ENCODE measurements at regions of chr1 and their contacts with region 1.

Region 1: GRCh38 chr1:77683160-77684148 is 996 bp upstream of the ZZZ3 start:
- DNase-seq: peak; percentile 83 to 94 (median 92)
- ATAC-seq: peak; percentile 86
- H3K4me3 ChIP-seq: peak overlapping the region; percentile 91
- H3K4me3 Mint-ChIP-seq: peak overlapping the region; percentile 80 to 97 (median 91)
- H3K27ac ChIP-seq: peak overlapping the region; percentile 92
- H3K27ac Mint-ChIP-seq: peak overlapping the region; percentile 89 to 100 (median 97)
- H3K4me1 ChIP-seq: peaks cover 15 to 33% of the 10 kb centered on the region in 2 donors
- H3K4me1 Mint-ChIP-seq: peaks cover 20 to 51% (median 40%) of the 10 kb centered on the region in 7 donors
- H3K27me3 ChIP-seq: no peaks in the 10 kb centered on the region
- H3K27me3 Mint-ChIP-seq: no peaks in the 10 kb centered on the region

Region 2: GRCh38 chr1:75785983-75786853 is 1897.2 kb before region 1 on chr1 and contains the start of gene RABGGTB:
- CTCF ChIA-PET with region 1: no interaction called
- POLR2A ChIA-PET with region 1: no interaction called
- intact Hi-C with region 1: loop called (anchors 1 kb)
- DNase-seq: peak; percentile 87 to 94 (median 91)
- ATAC-seq: peak; percentile 98
- H3K4me3 ChIP-seq: peak within 1 kb of the TSS; percentile 97
- H3K4me3 Mint-ChIP-seq: peak within 1 kb of the TSS; percentile 88 to 99 (median 97)
- H3K27ac ChIP-seq: peak within 1 kb of the TSS; percentile 83
- H3K27ac Mint-ChIP-seq: peak within 1 kb of the TSS; percentile 85 to 99 (median 97)
- H3K4me1 ChIP-seq: peaks cover 33 to 44% of the 10 kb centered on the region in 2 donors
- H3K4me1 Mint-ChIP-seq: peaks cover 44 to 62% (median 48%) of the 10 kb centered on the region in 7 donors
- H3K27me3 ChIP-seq: no peaks in the 10 kb centered on the region
- H3K27me3 Mint-ChIP-seq: peaks cover 0 to 7% (median 0%) of the 10 kb centered on the region in 5 donors
- total RNA-seq, gene RABGGTB: 89.7 to 140 (median 101) TPM

Region 3: DNA sequence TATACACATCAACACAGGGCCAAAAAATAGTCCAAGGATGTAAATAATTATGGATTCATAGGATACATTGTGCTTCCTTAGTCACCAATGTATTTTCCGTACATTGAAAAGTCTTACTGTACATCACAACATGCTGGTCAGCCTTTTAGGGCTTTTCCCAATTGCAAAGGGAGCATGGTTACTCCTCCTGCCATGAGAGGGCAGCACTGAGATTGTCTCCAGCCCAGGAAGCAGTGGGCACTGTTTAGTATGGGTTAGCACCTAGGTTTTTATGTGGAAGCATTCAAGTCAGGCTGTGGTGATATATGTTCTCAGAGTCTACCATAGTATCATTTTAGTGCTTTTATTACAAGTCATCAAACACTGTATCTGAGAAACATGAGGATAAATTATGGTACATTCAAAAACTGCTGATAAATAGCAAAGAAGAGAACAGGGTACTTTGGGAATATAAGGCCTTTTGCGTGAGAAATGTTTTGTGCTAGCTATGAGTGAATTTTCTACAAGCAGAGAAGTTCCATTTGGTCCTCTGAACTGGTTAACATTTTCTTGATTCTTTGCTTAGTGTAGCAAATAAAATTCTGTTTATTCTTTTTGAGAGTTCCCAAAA is 782.2 kb before region 1 on chr1:
- CTCF ChIA-PET with region 1: no interaction called
- POLR2A ChIA-PET with region 1: no interaction called
- intact Hi-C with region 1: loop called in 1 of 2 experiments (anchors 1 kb)
- DNase-seq: peak in 6 of 9 donors; percentile 4 to 41 (median 30)
- ATAC-seq: peak; percentile 53
- H3K4me3 ChIP-seq: no peak overlapping the region
- H3K4me3 Mint-ChIP-seq: no peak overlapping the region
- H3K27ac ChIP-seq: no peak overlapping the region
- H3K27ac Mint-ChIP-seq: no peak overlapping the region
- H3K4me1 ChIP-seq: no peaks in the 10 kb centered on the region
- H3K4me1 Mint-ChIP-seq: no peaks in the 10 kb centered on the region
- H3K27me3 ChIP-seq: no peaks in the 10 kb centered on the region
- H3K27me3 Mint-ChIP-seq: peaks cover 0 to 7% (median 0%) of the 10 kb centered on the region in 5 donors

Region 4: DNA sequence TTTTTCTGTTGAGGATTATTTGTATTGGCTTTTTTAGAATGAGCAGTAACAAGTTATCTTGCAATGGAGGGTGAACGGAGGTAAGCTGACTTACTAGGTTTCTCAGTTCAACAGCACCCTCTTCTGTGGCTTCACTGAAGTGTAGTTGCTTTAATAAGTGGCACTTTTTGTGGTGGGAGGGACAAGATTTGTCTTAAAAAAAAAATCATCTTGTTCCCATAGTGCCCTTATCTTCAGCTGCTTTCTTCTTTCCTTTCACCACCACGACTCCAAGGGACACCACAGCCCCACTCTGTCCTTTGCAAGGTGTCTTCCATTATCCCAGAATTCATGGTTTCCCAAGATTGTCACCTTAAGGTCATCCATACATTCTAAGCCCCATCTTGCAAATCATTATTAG is 557.1 kb before region 1 on chr1:
- CTCF ChIA-PET with region 1: no interaction called
- POLR2A ChIA-PET with region 1: no interaction called
- intact Hi-C with region 1: no loop called
- DNase-seq: peak in 6 of 9 donors; percentile 17 to 50 (median 38)
- ATAC-seq: peak; percentile 61
- H3K4me3 ChIP-seq: no peak overlapping the region
- H3K4me3 Mint-ChIP-seq: no peak overlapping the region
- H3K27ac ChIP-seq: no peak overlapping the region
- H3K27ac Mint-ChIP-seq: peak overlapping the region in 2 of 9 donors; percentile 22 to 41
- H3K4me1 ChIP-seq: no peaks in the 10 kb centered on the region
- H3K4me1 Mint-ChIP-seq: peaks cover 0 to 6% (median 0%) of the 10 kb centered on the region in 7 donors
- H3K27me3 ChIP-seq: no peaks in the 10 kb centered on the region
- H3K27me3 Mint-ChIP-seq: no peaks in the 10 kb centered on the region

Region 5: DNA sequence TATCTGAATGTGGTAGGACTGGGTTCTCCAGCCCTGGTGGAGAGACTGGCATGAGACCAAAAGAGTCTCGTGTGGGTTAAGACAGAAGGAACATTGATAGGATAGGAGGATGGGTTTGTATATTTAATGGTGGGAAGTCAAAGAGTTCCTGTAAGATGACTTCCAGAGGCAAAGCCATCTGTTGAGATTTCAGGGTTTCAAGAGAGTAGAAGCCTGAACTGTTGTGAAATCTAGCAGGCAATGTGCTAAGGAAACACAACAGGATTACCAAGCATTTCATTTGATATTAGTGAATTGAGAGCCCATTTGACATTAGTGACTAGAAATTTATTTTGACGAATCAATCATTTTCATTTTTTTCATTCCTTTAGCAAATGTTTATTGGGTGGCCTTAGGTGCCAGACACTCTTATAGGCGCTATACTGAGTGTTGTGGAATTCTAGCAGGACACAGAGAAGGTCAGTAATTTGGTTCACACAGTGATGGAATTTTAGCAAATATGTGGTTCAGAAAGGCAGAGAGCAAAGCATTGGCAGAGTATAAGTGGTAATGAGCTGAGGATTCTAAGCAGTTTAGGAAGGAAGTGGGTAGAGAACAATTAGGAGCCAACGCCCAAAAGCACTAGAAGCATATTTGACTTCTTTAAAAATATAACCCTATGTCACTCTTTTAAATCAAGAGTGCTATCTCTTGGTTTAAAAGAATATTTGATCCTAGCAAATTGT is 252.3 kb before region 1 on chr1:
- CTCF ChIA-PET with region 1: no interaction called
- POLR2A ChIA-PET with region 1: interaction called, 5 read pairs
- intact Hi-C with region 1: loop called in 1 of 2 experiments (anchors 2 kb)
- DNase-seq: peak in 7 of 9 donors; percentile 40 to 81 (median 68)
- ATAC-seq: peak; percentile 97
- H3K4me3 ChIP-seq: peak overlapping the region; percentile 3
- H3K4me3 Mint-ChIP-seq: no peak overlapping the region
- H3K27ac ChIP-seq: peak overlapping the region; percentile 65
- H3K27ac Mint-ChIP-seq: no peak overlapping the region
- H3K4me1 ChIP-seq: peaks cover 32 to 55% of the 10 kb centered on the region in 2 donors
- H3K4me1 Mint-ChIP-seq: peaks cover 5 to 33% (median 20%) of the 10 kb centered on the region in 7 donors
- H3K27me3 ChIP-seq: no peaks in the 10 kb centered on the region
- H3K27me3 Mint-ChIP-seq: no peaks in the 10 kb centered on the region

Region 6: DNA sequence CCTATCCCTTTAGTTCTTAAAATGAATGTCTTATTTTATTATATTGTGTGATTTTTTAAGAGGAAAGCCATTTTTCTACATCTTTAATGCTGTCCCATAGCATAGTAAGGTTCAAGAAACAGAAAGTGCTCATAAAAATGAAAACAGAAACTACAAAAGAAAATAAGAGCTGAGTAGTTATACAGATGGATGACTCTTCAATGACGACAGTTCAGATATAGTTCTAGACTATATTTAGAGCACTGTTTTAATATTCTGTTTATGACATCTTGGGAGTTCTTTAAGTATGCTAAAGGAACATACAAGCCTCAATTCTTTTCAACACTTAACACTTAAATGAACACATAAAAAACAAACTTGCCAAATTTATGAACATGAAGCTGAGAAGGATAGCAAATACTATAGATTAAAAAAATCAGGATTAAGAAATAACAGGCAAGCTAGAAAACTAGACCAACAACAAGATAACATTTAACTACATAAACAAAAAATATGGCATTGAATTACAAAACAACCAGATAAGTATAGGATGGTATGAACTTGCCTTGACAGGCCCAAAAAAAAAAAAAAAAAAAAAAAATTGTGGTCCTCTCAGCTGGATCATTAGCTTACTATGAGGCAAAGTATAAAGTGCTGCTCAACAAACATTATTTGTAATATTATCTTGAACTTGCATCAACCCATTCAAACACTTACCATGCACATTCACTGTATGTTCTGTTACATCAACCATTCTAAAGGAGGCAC is 88.9 kb before region 1 on chr1:
- CTCF ChIA-PET with region 1: no interaction called
- POLR2A ChIA-PET with region 1: no interaction called
- intact Hi-C with region 1: no loop called
- DNase-seq: no peak
- ATAC-seq: no peak
- H3K4me3 ChIP-seq: no peak overlapping the region
- H3K4me3 Mint-ChIP-seq: no peak overlapping the region
- H3K27ac ChIP-seq: no peak overlapping the region
- H3K27ac Mint-ChIP-seq: peak overlapping the region in 3 of 9 donors; percentile 1 to 59 (median 14)
- H3K4me1 ChIP-seq: no peaks in the 10 kb centered on the region
- H3K4me1 Mint-ChIP-seq: peaks cover 14 to 73% (median 39%) of the 10 kb centered on the region in 7 donors
- H3K27me3 ChIP-seq: no peaks in the 10 kb centered on the region
- H3K27me3 Mint-ChIP-seq: no peaks in the 10 kb centered on the region

Region 7: DNA sequence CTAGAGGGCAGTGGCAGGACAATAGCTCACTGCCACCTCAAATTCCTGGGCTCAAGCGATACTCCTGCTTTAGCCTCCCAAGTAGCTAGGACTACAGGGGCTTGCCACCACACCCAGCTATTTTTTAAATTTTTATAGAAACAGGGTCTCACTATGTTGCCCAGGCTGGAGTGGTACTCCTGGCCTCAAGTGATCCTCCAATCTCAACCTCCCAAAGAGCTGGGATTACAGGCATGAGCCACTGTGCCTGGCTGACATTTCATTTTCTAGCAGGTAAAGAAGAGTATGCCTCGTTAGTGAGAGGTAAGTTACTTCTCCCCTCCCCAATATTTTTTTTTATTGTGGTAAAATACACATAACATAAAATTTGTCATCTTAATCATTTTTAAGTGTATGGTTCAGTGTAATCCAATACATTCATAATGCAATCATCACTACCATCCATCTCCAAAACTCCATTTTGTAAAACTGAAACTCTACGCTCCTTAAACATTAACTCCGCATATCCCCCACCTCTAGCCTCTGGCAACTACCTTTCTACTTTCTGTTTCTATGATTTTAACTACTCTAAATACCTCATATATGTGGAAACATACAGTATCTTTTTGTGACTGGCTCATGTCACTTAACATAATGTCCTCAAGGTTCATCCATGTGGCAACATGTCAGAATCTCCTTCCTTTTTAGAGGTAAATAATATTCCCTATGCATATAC is 23.4 kb before region 1 on chr1:
- CTCF ChIA-PET with region 1: no interaction called
- POLR2A ChIA-PET with region 1: no interaction called
- intact Hi-C with region 1: loop called in 1 of 2 experiments (anchors 1 kb)
- DNase-seq: no peak
- ATAC-seq: no peak
- H3K4me3 ChIP-seq: no peak overlapping the region
- H3K4me3 Mint-ChIP-seq: no peak overlapping the region
- H3K27ac ChIP-seq: no peak overlapping the region
- H3K27ac Mint-ChIP-seq: peak overlapping the region in 4 of 9 donors; percentile 1 to 70 (median 45)
- H3K4me1 ChIP-seq: peaks cover 0 to 3% of the 10 kb centered on the region in 2 donors
- H3K4me1 Mint-ChIP-seq: peaks cover 8 to 65% (median 62%) of the 10 kb centered on the region in 7 donors
- H3K27me3 ChIP-seq: no peaks in the 10 kb centered on the region
- H3K27me3 Mint-ChIP-seq: no peaks in the 10 kb centered on the region

Region 8: DNA sequence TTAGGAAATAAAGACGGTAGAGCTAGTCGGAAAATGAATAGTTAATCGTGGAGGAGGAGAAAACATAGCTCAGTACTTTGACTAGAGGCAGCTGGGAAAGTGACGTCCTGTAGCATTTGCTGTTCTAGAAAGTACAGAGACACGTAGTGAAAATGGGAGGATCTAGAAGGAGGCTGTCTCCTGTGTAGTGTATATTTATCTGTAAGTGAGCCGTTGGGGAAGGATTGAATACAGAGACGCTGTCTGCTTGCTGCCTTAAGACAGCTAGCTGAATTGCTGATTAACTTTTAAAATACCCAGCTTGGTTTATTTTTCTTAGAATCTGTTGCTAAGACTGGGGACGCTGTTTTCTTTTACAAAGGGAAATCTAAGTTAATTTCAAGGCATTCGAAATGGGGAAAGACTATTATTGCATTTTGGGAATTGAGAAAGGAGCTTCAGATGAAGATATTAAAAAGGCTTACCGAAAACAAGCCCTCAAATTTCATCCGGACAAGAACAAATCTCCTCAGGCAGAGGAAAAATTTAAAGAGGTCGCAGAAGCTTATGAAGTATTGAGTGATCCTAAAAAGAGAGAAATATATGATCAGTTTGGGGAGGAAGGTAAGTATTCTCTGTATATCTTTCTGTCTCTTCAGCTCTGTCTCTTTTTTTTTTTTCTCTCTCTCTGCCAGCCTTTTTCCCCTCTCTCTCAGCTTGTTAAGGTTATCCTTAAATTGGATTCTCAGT is 321.4 kb after region 1 on chr1 and contains the start of gene DNAJB4:
- CTCF ChIA-PET with region 1: no interaction called
- POLR2A ChIA-PET with region 1: interaction called, 12 read pairs
- intact Hi-C with region 1: loop called (anchors 1 kb)
- DNase-seq: peak in 8 of 9 donors; percentile 30 to 92 (median 87)
- ATAC-seq: peak; percentile 99
- H3K4me3 ChIP-seq: peak within 1 kb of the TSS; percentile 57
- H3K4me3 Mint-ChIP-seq: peak within 1 kb of the TSS; percentile 87 to 99 (median 92)
- H3K27ac ChIP-seq: peak within 1 kb of the TSS; percentile 95
- H3K27ac Mint-ChIP-seq: peak within 1 kb of the TSS; percentile 92 to 100 (median 99)
- H3K4me1 ChIP-seq: peaks cover 8 to 17% of the 10 kb centered on the region in 2 donors
- H3K4me1 Mint-ChIP-seq: peaks cover 9 to 57% (median 53%) of the 10 kb centered on the region in 7 donors
- H3K27me3 ChIP-seq: no peaks in the 10 kb centered on the region
- H3K27me3 Mint-ChIP-seq: peaks cover 0 to 3% (median 0%) of the 10 kb centered on the region in 5 donors
- total RNA-seq, gene DNAJB4: 11.4 to 20.1 (median 18.2) TPM

Measured in naive thymus-derived CD4-positive, alpha-beta T cell (primary cell).